Transverse colon (tissue), 4 donors: ENCODE measurements at regions of chr14 and their contacts with region 1.

Region 1: GRCh38 chr14:75654127-75654732 is 6.4 kb downstream of the ERG28 start:
- DNase-seq: peak; percentile 87
- H3K4me3 ChIP-seq: no peak overlapping the region
- H3K27ac ChIP-seq: no peak overlapping the region
- H3K4me1 ChIP-seq: peaks cover 0 to 7% (median 2%) of the 10 kb centered on the region in 4 donors
- H3K27me3 ChIP-seq: no peaks in the 10 kb centered on the region
- CTCF ChIP-seq: peak; percentile 91 to 99 (median 95)
- EP300 ChIP-seq: no peak
- POLR2A ChIP-seq: no peak

Region 2: DNA sequence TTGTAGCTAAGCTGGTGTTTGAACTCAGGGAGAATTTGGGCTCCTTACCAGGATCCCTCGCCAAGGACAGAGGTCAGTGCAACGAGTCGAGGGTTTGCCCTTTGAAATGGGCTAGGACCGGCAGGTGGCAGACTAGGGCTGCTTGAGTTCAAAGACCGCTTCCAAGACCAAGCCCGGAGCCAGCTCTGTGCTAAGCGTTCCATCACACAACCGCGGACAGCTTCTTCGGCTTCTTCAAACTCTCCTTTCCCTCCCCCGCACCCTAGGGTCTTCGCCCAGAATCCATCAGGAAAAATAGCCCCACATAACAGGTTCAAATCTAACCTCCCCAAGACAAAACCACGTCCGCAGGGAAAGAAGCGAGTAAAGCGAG is 76.5 kb before region 1 on chr14:
- in situ Hi-C with region 1: loop called (anchors 5 kb)
- intact Hi-C with region 1: loop called (anchors 2 kb)
- DNase-seq: peak; percentile 90
- H3K4me3 ChIP-seq: peak overlapping the region; percentile 37 to 70 (median 47)
- H3K27ac ChIP-seq: peak overlapping the region; percentile 83 to 89 (median 88)
- H3K4me1 ChIP-seq: peaks cover 0 to 33% (median 23%) of the 10 kb centered on the region in 4 donors
- H3K27me3 ChIP-seq: no peaks in the 10 kb centered on the region
- CTCF ChIP-seq: peak; percentile 68 to 82 (median 72)
- EP300 ChIP-seq: no peak
- POLR2A ChIP-seq: no peak